ENCODE measurements at regions of chr9 and their contacts with region 1.

Region 1: DNA sequence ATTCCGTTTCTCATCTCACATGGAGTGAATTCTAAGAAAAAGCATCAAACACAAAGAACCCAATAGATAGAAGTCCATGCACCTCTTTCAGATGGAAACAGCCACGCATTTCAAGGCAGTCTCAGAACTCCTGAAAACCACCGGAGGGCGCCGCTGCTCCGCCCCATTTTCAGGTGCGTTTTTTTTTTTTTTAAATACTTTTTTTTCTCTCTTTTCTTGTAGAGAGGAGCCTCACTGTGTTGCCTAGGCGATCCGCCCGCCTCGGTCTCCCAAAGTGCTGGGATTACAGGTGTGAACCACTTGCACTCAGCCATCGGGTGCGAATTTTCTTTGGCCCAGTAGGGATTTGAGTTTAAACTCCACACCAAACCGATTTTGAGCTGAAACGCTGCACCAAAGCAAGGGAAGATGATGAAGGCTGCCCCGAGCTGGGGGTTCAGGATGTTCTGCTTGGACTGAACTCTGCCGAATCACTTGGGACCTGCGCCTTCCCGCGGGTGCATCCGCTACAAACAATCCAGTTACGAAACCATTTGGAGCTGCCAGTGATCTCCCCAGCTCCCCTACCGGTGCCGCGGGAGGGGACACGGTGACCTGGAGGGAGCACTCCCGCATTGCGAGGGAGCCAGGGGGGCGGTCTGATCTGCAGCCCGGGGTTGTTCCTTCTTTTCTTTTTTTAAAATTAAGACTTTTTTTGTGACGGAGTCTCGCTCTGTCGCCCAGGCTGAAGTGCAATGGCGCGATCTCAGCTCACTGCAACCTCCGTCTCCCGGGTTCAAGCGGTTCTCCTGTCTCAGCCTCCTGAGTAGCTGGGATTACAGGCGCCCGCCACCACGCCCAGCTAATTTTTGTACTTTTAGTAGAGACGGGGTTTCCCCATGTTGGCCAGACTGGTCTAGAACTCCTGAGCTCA is 1.4 kb downstream of the PTGR1 start:
- DNase-seq: peak; percentile 75 to 83 (median 81)
- H3K4me3 ChIP-seq: peak overlapping the region; percentile 41 to 77 (median 73)
- H3K27ac ChIP-seq: no peak overlapping the region
- H3K4me1 ChIP-seq: peaks cover 2 to 20% (median 19%) of the 10 kb centered on the region in 4 experiments
- H3K27me3 ChIP-seq: peaks cover 0 to 23% (median 2%) of the 10 kb centered on the region in 5 experiments

Region 2: GRCh38 chr9:111621895-111622480 is 23.9 kb after region 1 on chr9:
- CTCF ChIA-PET with region 1: interaction called, 16 read pairs
- POLR2A ChIA-PET with region 1: no interaction called
- DNase-seq: peak in 2 of 3 donors; percentile 52 to 61
- H3K4me3 ChIP-seq: no peak overlapping the region
- H3K27ac ChIP-seq: no peak overlapping the region
- H3K4me1 ChIP-seq: no peaks in the 10 kb centered on the region
- H3K27me3 ChIP-seq: peaks cover 0 to 2% (median 0%) of the 10 kb centered on the region in 5 experiments

Region 3: GRCh38 chr9:111691672-111692329 is 93.7 kb after region 1 on chr9:
- CTCF ChIA-PET with region 1: interaction called, 16 read pairs
- POLR2A ChIA-PET with region 1: no interaction called
- DNase-seq: peak; percentile 44 to 60 (median 57)
- H3K4me3 ChIP-seq: no peak overlapping the region
- H3K27ac ChIP-seq: no peak overlapping the region
- H3K4me1 ChIP-seq: no peaks in the 10 kb centered on the region
- H3K27me3 ChIP-seq: no peaks in the 10 kb centered on the region

Measured in common myeloid progenitor, CD34-positive (primary cell).